Dendritic cell treated with granulocyte-macrophage colony-stimulating factor and Interleukin-4, amounts not matched to agents 40 ng/mL and 50 ng/mL, for 4 days (primary cell): ENCODE measurements at regions of chr1 and their contacts with region 1.

Region 1: GRCh38 chr1:6343506-6344405 is 49.8 kb downstream of the ACOT7 start:
- H3K4me3 Mint-ChIP-seq: no peak overlapping the region
- H3K27ac Mint-ChIP-seq: no peak overlapping the region
- H3K4me1 Mint-ChIP-seq: peaks cover 17% of the 10 kb centered on the region
- H3K27me3 Mint-ChIP-seq: no peaks in the 10 kb centered on the region

Region 2: DNA sequence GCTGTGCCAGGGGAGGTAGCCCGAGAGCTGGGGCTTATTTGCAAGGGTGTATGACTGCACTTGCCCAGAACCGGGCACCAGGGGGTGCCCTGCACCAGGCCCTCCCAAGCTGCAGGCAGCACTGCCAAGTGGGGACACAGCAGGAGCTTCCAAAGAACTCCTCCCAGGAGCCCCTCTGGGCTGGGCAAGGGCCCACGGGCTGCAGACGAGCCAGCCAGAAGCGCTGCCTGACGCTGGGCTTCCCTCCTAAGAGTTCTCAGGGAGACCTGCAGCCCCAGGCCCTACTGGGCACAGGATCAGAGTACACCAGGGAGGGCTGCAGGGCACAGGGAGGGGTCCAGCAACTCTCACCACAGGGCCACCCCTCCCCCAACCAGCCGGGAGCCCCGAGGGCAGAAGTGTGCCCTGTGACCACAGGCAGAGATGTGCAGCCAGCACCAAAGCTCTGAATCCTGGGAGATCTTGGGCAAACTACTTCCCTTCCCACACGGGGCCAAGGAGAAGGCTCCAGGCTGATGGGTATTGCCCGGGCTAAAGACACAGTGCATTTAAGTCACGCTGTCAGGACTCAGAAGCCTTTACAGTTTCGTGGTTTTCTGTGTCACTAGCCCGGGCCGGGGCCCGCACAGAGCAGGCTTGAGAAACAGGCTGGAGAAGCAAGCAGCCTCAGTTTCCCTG is 234.7 kb before region 1 on chr1:
- intact Hi-C with region 1: loop called (anchors 5 kb)
- H3K4me3 Mint-ChIP-seq: no peak overlapping the region
- H3K27ac Mint-ChIP-seq: no peak overlapping the region
- H3K4me1 Mint-ChIP-seq: no peaks in the 10 kb centered on the region
- H3K27me3 Mint-ChIP-seq: peaks cover 42% of the 10 kb centered on the region

Region 3: DNA sequence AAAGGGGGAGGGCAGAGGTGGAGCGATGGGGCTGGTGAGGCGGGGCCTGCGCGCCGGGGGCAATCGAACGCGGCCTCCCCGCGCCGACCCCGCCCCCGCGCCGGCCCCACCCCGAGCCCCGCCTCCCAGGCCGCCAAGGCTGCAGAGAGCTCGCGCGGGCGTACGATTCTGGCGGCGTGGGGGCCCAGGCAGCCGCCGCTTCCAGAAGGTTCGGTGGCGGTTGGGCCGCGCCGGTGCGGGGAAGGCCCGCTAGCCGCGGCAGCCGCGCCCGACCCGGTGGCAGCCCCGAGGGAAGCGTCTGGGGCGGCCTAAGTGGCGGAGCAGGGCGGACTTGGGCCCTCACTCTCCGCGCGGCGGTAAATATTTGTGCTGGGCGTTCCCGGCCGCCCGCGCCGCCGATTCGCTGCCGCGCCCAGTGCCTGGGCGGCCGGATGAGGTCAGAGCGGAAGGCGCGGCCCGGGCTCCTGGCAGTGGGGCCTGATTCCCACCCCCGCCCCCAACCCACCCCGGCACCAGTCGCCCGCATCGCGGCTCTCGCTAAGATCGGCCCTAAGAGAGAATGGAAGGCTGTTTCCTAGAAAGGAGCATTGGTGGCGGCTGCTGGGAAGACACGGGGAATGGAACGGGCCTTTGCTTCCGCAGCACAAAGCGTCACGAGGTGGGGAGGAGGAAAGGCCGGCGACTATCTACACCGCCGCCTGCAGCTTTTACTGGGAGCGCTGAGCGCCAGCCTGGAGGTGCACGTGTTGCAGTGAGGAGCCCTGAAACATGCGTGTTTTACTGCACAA is 49.8 kb after region 1 on chr1 and contains the start of gene ACOT7:
- intact Hi-C with region 1: loop called (anchors 1 kb)
- H3K4me3 Mint-ChIP-seq: peak within 1 kb of the TSS; percentile 86
- H3K27ac Mint-ChIP-seq: peak within 1 kb of the TSS; percentile 98
- H3K4me1 Mint-ChIP-seq: peaks cover 35% of the 10 kb centered on the region
- H3K27me3 Mint-ChIP-seq: peaks cover 21% of the 10 kb centered on the region